PC-9 (cell line): ENCODE measurements at regions of chr13 and their contacts with region 1.

Region 1: GRCh38 chr13:99916366-99917103 is 55.0 kb downstream of the ZIC5 start:
- DNase-seq: peak; percentile 34 to 71
- H3K4me3 ChIP-seq: no peak overlapping the region
- H3K27ac ChIP-seq: no peak overlapping the region
- H3K4me1 ChIP-seq: no peaks in the 10 kb centered on the region
- H3K27me3 ChIP-seq: no peaks in the 10 kb centered on the region
- CTCF ChIP-seq: peak; percentile 95

Region 2: DNA sequence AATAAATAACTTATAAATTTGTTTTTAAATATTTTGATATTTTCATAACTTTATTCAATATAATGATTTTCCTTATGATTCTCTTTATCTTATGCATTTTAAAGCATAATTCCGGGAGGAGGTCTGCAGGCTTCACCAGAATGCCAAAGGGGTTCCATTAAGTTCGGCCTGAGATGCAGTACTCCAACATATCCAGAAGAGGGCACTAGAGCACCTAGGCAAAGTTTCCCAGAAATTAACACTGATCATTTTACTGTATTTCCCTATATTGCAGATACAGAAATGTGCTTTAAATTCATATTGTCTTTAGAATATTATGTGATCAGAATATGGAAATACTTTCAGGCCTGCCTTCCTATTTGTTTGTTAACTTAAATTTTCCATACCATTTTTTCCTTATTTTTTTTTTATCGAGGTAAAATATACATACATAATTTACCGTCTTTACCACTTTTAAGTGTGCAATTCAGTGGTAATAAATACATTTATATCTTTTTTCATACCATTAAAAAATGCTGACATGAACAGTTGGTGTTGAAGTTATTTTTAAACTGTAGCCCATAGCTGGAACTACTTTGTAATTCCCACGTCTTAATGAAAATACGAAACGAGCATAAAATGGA is 474.2 kb before region 1 on chr13:
- CTCF ChIA-PET with region 1: no interaction called
- POLR2A ChIA-PET with region 1: no interaction called
- intact Hi-C with region 1: loop called (anchors 10 kb)
- DNase-seq: peak; percentile 42 to 49
- H3K4me3 ChIP-seq: no peak overlapping the region
- H3K27ac ChIP-seq: no peak overlapping the region
- H3K4me1 ChIP-seq: peaks cover 19% of the 10 kb centered on the region
- H3K27me3 ChIP-seq: no peaks in the 10 kb centered on the region
- CTCF ChIP-seq: peak; percentile 96

Region 3: DNA sequence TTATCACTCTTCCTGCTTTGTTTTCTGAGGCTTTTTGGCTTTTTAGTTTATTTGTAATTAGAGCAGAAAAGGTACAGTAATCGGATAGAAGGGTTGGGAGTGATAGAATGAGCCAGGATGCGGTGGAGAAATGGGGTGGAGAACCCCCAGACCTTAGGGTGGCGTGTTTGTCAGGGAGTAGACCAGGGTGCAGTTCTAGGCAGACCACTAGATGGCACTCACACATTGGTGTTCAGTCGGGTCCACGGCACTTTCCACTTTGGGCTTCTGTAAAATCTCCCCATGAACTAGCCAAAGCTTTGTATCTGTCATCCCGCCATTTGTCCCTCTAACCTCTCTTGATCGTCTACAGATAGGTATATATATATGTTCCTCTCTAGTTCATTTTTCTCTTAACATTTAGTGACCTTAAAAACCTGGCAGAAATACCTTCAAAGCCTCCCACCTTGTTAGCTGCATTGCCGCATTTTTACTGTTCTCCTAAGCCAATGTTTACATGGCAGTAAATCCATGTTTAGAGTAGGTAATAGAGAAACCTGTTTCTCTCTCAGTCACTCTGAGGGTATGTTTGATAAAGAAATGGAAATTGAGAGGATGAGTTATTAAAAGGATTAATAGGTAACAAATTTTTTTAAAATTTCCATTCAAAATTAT is 260.3 kb before region 1 on chr13:
- CTCF ChIA-PET with region 1: no interaction called
- POLR2A ChIA-PET with region 1: no interaction called
- intact Hi-C with region 1: loop called (anchors 5 kb)
- DNase-seq: peak; percentile 53 to 60
- H3K4me3 ChIP-seq: no peak overlapping the region
- H3K27ac ChIP-seq: no peak overlapping the region
- H3K4me1 ChIP-seq: no peaks in the 10 kb centered on the region
- H3K27me3 ChIP-seq: no peaks in the 10 kb centered on the region
- CTCF ChIP-seq: peak; percentile 96

Region 4: GRCh38 chr13:100514788-100515409 is 598.4 kb after region 1 on chr13:
- CTCF ChIA-PET with region 1: interaction called, 3 read pairs
- POLR2A ChIA-PET with region 1: no interaction called
- intact Hi-C with region 1: loop called (anchors 1 kb)
- DNase-seq: peak; percentile 42 to 62
- H3K4me3 ChIP-seq: no peak overlapping the region
- H3K27ac ChIP-seq: no peak overlapping the region
- H3K4me1 ChIP-seq: no peaks in the 10 kb centered on the region
- H3K27me3 ChIP-seq: no peaks in the 10 kb centered on the region
- CTCF ChIP-seq: peak; percentile 97